ENCODE measurements at regions of chr17 and their contacts with region 1.

Region 1: DNA sequence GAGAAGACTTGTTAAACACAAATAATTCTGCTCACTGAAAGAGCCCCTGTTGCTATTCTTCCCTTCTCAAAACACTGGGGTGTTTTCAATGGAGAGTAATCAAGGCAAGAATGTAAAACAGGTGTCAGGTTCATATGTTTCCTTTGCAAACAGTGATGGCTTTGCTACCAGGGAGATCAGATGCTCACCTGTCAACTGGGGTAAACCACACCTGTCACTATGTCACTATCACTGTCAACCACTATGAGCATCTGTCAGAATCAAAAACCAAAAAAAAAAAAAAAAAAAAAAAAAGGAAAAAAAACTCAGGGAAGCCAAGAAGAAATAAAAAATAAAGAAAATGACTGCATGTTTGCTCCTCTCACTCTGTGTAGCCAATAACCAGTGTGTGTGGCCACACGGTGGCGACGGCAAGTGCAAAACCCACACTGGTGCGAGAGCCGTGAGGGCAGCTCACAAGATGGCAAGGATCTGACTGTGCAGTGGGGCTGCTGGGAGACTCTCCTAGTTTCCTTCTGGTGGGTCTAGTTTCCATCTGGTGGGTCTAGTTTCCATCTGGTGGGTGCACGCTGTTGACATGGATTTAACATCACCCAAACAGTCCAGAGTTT is 22.7 kb downstream of the USP22 start:
- DNase-seq: peak in 3 of 7 donors; percentile 49 to 63 (median 49)
- H3K4me3 ChIP-seq: no peak overlapping the region
- H3K27ac ChIP-seq: no peak overlapping the region
- H3K4me1 ChIP-seq: no peaks in the 10 kb centered on the region
- H3K27me3 ChIP-seq: no peaks in the 10 kb centered on the region
- CTCF ChIP-seq: peak in 4 of 6 experiments; percentile 31 to 38 (median 36)
- POLR2A ChIP-seq: no peak

Region 2: GRCh38 chr17:21214015-21214776 is 194.1 kb after region 1 on chr17 and contains the start of gene TMEM11:
- intact Hi-C with region 1: loop called in 1 of 2 experiments (anchors 10 kb)
- DNase-seq: peak; percentile 95 to 97 (median 96)
- H3K4me3 ChIP-seq: peak within 1 kb of the TSS; percentile 78 to 99 (median 92)
- H3K27ac ChIP-seq: peak within 1 kb of the TSS; percentile 82 to 95 (median 90)
- H3K4me1 ChIP-seq: peaks cover 23 to 48% of the 10 kb centered on the region in 2 donors
- H3K27me3 ChIP-seq: no peaks in the 10 kb centered on the region
- CTCF ChIP-seq: peak in 1 of 6 experiments; percentile 10
- POLR2A ChIP-seq: peak; percentile 34 to 43
- total RNA-seq, gene TMEM11: 12.4 to 75.8 (median 22.3) TPM